ENCODE measurements at regions of chr10 and their contacts with region 1.

Region 1: DNA sequence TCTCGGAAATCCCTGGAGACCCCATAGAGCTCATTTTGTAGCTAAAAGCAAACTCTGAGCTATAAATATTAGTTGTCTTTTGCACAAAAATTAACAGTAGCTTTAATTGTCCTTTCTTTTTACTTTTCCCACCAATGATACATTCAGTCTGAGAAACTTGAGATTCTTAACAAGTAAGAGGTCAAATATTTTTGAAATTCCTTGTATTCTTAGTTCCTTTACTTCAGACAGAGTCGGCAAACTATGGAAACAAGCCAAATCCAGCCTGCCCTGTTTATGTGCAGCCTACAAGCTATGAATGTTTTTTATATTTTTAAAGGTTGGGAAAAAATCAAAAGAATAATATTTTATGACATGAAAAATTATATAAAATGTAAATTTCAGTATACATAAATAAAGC is 146.6 kb downstream of the CTNNA3 start:
- DNase-seq: peak; percentile 12
- H3K4me3 ChIP-seq: no peak overlapping the region
- H3K27ac ChIP-seq: no peak overlapping the region
- H3K4me1 ChIP-seq: no peaks in the 10 kb centered on the region
- H3K27me3 ChIP-seq: no peaks in the 10 kb centered on the region
- CTCF ChIP-seq: no peak
- POLR2A ChIP-seq: no peak

Region 2: DNA sequence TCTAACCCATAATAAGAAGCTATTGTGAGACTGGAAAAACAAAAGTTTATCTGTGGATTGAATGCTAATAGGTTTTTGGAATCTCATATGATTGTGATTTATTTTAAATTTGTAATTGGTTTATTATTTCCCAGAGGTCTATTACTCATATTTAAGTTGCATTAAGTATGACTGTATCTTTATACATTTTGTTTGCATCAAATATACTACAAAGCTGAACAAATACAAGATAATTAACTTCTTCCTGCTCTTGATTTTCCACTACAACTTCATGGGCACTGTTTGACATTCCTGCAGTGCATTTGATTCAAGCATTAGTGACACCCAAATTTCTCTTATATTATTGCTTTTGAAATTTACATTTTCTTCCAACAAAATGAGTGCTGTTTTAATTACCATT is 927.3 kb before region 1 on chr10:
- CTCF ChIA-PET with region 1: no interaction called
- POLR2A ChIA-PET with region 1: no interaction called
- dilution Hi-C with region 1: no loop called
- intact Hi-C with region 1: no loop called
- DNase-seq: no peak
- H3K4me3 ChIP-seq: no peak overlapping the region
- H3K27ac ChIP-seq: no peak overlapping the region
- H3K4me1 ChIP-seq: no peaks in the 10 kb centered on the region
- H3K27me3 ChIP-seq: no peaks in the 10 kb centered on the region
- CTCF ChIP-seq: no peak
- POLR2A ChIP-seq: no peak

Region 3: DNA sequence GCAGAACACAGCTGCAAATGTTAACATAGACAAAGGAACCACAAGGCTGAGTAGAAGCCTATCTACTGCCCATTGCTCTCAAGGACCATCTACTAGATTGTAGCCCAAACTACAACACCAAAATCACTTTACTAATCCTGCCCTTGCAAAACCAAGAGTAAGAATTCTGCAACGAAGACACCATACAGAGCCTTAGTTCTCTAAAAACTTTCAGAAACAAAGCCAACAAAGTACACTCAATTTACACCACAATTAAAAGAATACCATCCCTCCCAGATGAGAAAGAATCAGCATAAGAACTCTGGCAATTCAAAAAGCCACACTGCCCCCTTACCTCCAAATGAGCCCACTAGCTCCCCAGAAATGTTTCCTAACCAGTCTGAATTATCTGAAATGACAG is 147.7 kb before region 1 on chr10:
- CTCF ChIA-PET with region 1: no interaction called
- POLR2A ChIA-PET with region 1: no interaction called
- dilution Hi-C with region 1: no loop called
- intact Hi-C with region 1: no loop called
- DNase-seq: no peak
- H3K4me3 ChIP-seq: no peak overlapping the region
- H3K27ac ChIP-seq: no peak overlapping the region
- H3K4me1 ChIP-seq: no peaks in the 10 kb centered on the region
- H3K27me3 ChIP-seq: no peaks in the 10 kb centered on the region
- CTCF ChIP-seq: no peak
- POLR2A ChIP-seq: no peak

Region 4: DNA sequence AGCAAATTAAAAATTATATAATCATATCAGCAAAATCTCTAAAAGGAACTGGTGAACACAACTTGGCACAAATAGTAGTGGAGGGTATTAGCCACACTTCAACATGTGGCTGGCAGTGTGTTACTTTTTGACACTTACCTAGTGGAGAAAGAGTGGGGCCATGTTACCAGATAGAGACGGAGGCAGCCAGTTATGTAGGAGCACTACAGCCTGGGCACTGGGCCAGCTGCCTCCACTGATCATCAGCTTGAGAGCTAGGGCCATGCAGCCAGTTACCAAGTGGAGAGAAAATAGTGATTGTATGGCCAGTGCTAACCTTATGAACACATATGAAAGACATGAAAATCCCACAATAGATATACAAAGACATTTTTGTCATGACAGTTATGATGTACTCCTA is 96.5 kb before region 1 on chr10:
- CTCF ChIA-PET with region 1: no interaction called
- POLR2A ChIA-PET with region 1: no interaction called
- dilution Hi-C with region 1: no loop called
- intact Hi-C with region 1: no loop called
- DNase-seq: no peak
- H3K4me3 ChIP-seq: no peak overlapping the region
- H3K27ac ChIP-seq: no peak overlapping the region
- H3K4me1 ChIP-seq: no peaks in the 10 kb centered on the region
- H3K27me3 ChIP-seq: no peaks in the 10 kb centered on the region
- CTCF ChIP-seq: no peak
- POLR2A ChIP-seq: no peak

Region 5: DNA sequence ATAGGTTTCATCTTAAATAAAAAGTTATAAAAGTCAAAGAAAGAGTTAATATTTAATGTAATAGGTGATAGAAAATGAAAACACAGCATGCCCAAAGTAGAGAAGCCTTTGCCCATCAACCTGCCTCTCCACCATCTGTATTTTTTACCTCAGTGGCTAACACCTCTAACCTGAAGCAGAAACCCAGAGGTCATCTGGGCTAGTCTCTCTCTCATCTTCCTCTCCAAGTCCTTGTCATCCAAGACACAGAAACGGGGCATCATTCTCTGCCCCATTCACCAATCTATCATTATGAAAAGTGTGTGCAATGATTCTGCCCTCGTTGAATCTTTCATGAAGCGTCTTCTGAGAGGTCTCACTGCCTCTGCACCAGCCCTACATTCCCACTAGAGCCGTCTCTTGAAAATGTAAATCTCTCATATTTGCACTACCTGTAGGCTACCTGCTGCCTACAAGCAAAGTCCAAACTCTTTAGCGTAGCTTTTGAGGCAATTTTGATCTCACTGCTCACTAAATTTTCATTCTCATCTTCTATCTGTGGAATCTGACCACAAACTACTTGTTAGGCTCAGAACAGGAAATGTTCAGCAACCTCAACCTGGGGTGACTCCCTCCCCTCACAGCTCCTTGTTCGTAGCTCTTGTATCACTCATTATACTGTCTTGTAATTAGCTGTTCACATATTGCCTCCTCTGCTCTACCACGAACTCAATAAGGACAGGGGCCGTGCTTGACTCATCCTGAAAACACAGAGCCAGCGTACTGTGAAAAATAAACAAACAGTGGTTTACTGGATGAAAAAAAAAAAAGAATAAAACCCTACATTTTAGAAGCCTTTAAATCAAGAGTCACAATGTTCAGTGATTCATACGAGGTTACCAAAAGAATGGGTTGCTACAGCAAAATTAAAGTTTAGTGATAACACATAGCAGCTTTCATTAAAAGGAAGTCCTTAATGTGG is 63.5 kb after region 1 on chr10:
- CTCF ChIA-PET with region 1: no interaction called
- POLR2A ChIA-PET with region 1: no interaction called
- dilution Hi-C with region 1: no loop called
- intact Hi-C with region 1: loop called (anchors 10 kb)
- DNase-seq: no peak
- H3K4me3 ChIP-seq: no peak overlapping the region
- H3K27ac ChIP-seq: no peak overlapping the region
- H3K4me1 ChIP-seq: peaks cover 2% of the 10 kb centered on the region
- H3K27me3 ChIP-seq: no peaks in the 10 kb centered on the region
- CTCF ChIP-seq: no peak
- POLR2A ChIP-seq: no peak

Region 6: DNA sequence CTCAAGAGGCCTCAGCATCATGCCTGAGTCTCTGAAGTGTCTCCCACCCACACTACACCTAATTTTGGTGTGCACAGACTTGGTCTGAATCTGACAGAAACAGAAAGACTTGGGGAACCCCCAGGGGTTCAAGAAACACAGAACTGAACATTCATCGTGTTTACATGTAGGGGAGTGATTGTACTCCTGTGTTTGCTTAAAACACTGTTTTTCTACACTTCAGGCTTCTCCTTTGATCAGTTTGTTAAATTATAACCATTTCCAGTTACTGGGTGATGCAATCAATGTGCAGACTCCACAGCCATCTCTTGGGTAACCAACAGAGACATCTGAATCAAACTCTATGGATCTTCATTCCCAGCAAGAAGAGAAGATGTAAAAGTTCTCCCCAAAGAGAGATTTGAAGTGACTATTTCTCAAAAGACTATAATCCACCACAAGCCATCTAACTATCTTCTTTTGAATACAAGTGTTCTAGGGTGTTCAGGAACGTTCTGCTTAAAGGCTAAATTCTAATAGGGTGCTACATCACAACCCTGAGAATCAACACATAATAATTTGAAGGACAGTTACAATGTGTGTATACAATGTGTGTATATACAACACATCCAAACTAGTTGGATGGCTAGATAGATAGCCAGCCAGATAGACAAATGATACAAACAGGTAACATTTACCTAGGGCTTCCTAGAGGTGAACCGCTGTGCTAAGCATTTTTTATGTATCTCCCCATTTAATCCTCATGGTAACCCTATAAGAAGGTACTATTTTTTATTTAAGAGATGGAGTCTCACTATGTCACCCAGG is 254.4 kb after region 1 on chr10:
- CTCF ChIA-PET with region 1: no interaction called
- POLR2A ChIA-PET with region 1: no interaction called
- dilution Hi-C with region 1: no loop called
- intact Hi-C with region 1: no loop called
- DNase-seq: no peak
- H3K4me3 ChIP-seq: no peak overlapping the region
- H3K27ac ChIP-seq: no peak overlapping the region
- H3K4me1 ChIP-seq: no peaks in the 10 kb centered on the region
- H3K27me3 ChIP-seq: peaks cover 3 to 5% of the 10 kb centered on the region in 2 experiments
- CTCF ChIP-seq: no peak
- POLR2A ChIP-seq: no peak